ENCODE measurements at regions of chr7 and their contacts with region 1.

Region 1: GRCh38 chr7:91784463-91784862 is 96.0 kb downstream of the MTERF1 start:
- DNase-seq: no peak
- ATAC-seq: no peak
- H3K4me3 Mint-ChIP-seq: no peak overlapping the region
- H3K27ac Mint-ChIP-seq: no peak overlapping the region
- H3K4me1 Mint-ChIP-seq: no peaks in the 10 kb centered on the region
- H3K27me3 Mint-ChIP-seq: peaks cover 2% of the 10 kb centered on the region

Region 2: GRCh38 chr7:91089382-91089963 is 695.0 kb before region 1 on chr7:
- CTCF ChIA-PET with region 1: no interaction called
- POLR2A ChIA-PET with region 1: no interaction called
- intact Hi-C with region 1: loop called in 1 of 2 experiments (anchors 1 kb)
- DNase-seq: peak; percentile 14
- ATAC-seq: peak; percentile 51
- H3K4me3 Mint-ChIP-seq: no peak overlapping the region
- H3K27ac Mint-ChIP-seq: no peak overlapping the region
- H3K4me1 Mint-ChIP-seq: peaks cover 22% of the 10 kb centered on the region
- H3K27me3 Mint-ChIP-seq: no peaks in the 10 kb centered on the region

Region 3: DNA sequence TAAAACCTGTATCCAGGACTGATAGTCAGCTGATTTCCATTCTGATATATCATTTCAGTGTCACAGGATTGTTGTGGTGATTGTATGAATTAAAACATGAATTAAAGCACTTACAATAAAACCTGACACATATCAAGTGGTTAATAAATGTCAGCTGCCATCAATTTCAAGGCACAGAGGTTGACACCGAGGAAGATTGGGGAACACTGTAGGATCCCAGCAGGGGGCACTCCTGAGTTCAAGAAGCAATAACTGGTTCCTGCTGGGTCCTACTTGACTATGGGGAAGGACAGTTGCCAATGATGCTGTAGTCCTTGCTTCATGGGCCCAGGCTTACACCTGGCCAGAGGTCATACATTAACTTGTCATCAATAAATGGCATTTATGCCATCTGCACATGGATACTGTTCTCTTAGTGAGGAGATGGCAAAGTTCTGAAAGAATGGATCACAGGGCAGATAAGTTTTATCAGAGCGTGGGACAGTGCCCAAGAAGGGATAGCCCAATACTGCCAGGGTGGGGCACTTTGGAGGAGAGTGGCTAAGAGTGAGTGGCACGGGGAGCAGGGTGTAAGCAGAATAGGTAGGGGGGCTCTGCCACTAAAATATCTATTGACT is 496.1 kb before region 1 on chr7:
- CTCF ChIA-PET with region 1: no interaction called
- POLR2A ChIA-PET with region 1: no interaction called
- intact Hi-C with region 1: loop called in 1 of 2 experiments (anchors 5 kb)
- DNase-seq: peak; percentile 57
- ATAC-seq: no peak
- H3K4me3 Mint-ChIP-seq: no peak overlapping the region
- H3K27ac Mint-ChIP-seq: no peak overlapping the region
- H3K4me1 Mint-ChIP-seq: no peaks in the 10 kb centered on the region
- H3K27me3 Mint-ChIP-seq: peaks cover 2% of the 10 kb centered on the region

Measured in activated CD4-positive, alpha-beta T cell treated with anti-CD3 and anti-CD28 coated beads for 36 hours (primary cell).